A549 (cell line): ENCODE measurements at regions of chr5 and their contacts with region 1.

Region 1: DNA sequence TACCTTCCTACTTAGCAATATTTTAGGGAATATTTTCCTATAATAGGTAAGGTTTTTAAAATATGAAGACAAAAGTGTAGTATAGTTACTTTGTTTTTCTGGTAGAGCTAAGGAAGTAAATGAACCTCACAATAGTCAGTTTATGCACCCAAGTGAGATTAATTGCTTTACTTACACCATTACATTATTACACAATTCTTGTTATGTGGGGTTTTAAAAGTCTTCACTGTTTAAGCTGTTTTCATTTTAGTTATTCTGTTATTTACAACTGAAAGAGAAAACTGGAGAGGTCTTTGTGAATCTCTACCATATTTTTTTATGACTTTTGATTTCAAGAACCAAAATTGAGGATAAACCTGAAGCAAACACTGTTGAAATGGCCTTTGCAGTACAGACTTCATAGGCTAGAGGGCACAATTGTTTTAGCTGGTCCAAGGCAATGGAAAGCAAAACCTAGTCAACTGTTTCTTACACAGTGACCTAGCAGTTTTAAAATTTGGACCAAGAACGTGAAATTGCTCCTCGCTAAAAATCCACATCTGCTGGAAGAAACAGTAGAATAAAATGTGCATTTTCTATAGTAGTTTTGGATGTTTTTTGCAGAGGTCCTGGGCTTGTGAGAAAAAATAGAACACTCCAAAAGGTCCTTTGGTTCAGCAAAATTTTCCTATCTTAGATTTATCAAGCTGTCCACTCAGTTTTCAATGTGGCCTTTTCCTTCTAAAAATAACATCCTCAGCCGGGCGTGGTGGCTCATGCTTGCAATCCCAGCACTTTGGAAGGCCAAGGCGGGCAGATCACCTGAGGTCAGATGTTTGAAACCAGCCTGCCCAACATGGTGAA is 66.4 kb upstream of the FER start:
- DNase-seq: peak; percentile 43 to 76
- ATAC-seq: peak; percentile 86 to 96; a peak in 5 of 6 replicates
- H3K4me3 ChIP-seq: no peak overlapping the region
- H3K27ac ChIP-seq: peak overlapping the region; percentile 34 to 45; a peak in 1 of 6 replicates
- H3K4me1 ChIP-seq: no peaks in the 10 kb centered on the region
- CTCF ChIP-seq: peak; percentile 77
- EP300 ChIP-seq: no peak
- POLR2A ChIP-seq: no peak
- RAD21 ChIP-seq: peak; percentile 85 to 89

Region 2: GRCh38 chr5:108670591-108671289 is 10.6 kb before region 1 on chr5:
- CTCF ChIA-PET with region 1: interaction called, 11 read pairs
- POLR2A ChIA-PET with region 1: no interaction called
- DNase-seq: no peak
- ATAC-seq: no peak
- H3K4me3 ChIP-seq: no peak overlapping the region
- H3K27ac ChIP-seq: no peak overlapping the region
- H3K4me1 ChIP-seq: no peaks in the 10 kb centered on the region
- CTCF ChIP-seq: no peak
- EP300 ChIP-seq: no peak
- POLR2A ChIP-seq: no peak
- RAD21 ChIP-seq: no peak

Region 3: DNA sequence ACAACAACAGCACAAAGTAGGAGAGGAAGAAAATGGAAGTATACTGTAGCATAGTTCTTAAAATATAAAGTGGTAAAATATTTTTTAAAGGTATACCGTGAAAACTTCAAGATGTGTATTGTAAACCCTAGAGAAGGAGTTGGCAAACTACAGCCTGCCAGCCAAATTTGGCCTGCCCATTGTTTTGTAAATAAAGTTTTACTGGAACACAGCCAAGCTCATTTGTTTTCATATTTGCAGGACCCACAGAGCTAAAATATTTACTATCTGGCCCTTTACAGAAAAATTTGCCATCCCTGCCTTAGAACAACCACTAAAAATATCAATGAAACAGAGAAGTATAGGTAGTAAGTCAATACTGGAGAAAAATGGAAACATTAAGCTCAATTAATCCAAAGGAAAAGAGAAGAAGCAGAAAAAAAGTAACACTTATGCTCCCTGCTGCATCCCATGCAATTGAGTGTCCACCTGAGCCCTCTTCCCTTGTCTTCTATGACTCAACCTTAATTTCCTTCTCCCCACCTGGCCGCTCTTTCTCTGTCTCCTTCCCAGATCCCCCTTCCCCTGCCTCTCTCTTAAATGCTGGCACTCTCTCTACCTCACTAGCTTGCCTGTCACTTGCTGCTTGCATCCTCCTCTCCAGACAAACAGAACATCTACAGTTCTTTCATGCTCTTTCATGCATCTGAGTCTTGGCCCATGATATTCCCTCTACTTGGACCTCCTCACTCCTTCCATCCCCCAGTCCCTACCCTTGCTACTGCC is 15.8 kb after region 1 on chr5:
- CTCF ChIA-PET with region 1: interaction called, 11 read pairs
- POLR2A ChIA-PET with region 1: no interaction called
- DNase-seq: no peak
- ATAC-seq: no peak
- H3K4me3 ChIP-seq: no peak overlapping the region
- H3K27ac ChIP-seq: no peak overlapping the region
- H3K4me1 ChIP-seq: no peaks in the 10 kb centered on the region
- CTCF ChIP-seq: no peak
- EP300 ChIP-seq: no peak
- POLR2A ChIP-seq: no peak
- RAD21 ChIP-seq: no peak

Region 4: GRCh38 chr5:108900668-108901067 is 219.4 kb after region 1 on chr5:
- CTCF ChIA-PET with region 1: no interaction called
- POLR2A ChIA-PET with region 1: no interaction called
- DNase-seq: no peak
- ATAC-seq: no peak; a peak in 1 of 6 replicates
- H3K4me3 ChIP-seq: no peak overlapping the region
- H3K27ac ChIP-seq: no peak overlapping the region
- H3K4me1 ChIP-seq: peaks cover 12% of the 10 kb centered on the region
- CTCF ChIP-seq: no peak
- EP300 ChIP-seq: no peak
- POLR2A ChIP-seq: no peak
- RAD21 ChIP-seq: no peak